ENCODE measurements at regions of chr16 and their contacts with region 1.

Region 1: GRCh38 chr16:79628501-79628975 is 28.0 kb upstream of the MAF start:
- DNase-seq: peak; percentile 91
- H3K4me3 Mint-ChIP-seq: peak overlapping the region; percentile 70
- H3K27ac Mint-ChIP-seq: peak overlapping the region; percentile 88
- H3K4me1 Mint-ChIP-seq: peaks cover 57% of the 10 kb centered on the region
- H3K27me3 Mint-ChIP-seq: peaks cover 15% of the 10 kb centered on the region

Region 2: DNA sequence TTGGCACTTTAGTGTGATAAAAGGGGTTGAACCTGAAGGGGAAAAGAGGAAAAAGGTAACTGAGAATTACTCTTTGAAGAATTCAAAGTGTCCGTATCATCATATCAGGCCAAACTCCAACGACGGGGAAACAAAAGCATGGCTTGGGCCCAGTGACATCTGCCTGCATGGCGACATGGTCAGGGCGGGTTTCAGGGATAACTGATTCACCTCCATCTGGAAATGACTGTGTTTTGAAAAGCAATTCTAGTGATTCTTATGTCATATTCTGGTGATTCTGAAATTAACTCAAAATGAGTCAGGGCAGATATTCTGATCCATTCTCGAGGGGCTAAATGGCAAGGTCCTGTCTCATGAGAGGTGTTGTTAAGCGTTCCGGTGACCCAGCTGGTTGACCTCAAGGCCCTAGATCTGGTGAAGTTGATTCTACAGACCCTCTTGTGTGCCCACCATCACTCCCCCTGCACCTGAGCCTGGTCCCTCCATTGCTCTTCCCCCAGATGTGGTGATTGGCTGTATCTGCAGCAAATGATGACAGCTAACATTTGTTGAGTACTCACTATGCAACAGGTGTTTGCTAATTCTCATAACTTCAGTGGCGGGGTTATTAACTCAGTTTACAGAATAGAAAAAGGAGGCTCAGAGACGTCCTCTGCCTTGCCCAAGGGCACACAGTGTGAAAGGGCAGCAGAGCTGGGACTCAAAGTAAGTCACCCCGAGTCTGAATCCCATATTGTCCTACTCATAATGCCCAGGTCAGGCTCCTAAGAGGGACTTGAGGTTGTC is 279.8 kb before region 1 on chr16:
- intact Hi-C with region 1: no loop called
- DNase-seq: no peak
- H3K4me3 Mint-ChIP-seq: no peak overlapping the region
- H3K27ac Mint-ChIP-seq: no peak overlapping the region
- H3K4me1 Mint-ChIP-seq: no peaks in the 10 kb centered on the region
- H3K27me3 Mint-ChIP-seq: no peaks in the 10 kb centered on the region

Region 3: DNA sequence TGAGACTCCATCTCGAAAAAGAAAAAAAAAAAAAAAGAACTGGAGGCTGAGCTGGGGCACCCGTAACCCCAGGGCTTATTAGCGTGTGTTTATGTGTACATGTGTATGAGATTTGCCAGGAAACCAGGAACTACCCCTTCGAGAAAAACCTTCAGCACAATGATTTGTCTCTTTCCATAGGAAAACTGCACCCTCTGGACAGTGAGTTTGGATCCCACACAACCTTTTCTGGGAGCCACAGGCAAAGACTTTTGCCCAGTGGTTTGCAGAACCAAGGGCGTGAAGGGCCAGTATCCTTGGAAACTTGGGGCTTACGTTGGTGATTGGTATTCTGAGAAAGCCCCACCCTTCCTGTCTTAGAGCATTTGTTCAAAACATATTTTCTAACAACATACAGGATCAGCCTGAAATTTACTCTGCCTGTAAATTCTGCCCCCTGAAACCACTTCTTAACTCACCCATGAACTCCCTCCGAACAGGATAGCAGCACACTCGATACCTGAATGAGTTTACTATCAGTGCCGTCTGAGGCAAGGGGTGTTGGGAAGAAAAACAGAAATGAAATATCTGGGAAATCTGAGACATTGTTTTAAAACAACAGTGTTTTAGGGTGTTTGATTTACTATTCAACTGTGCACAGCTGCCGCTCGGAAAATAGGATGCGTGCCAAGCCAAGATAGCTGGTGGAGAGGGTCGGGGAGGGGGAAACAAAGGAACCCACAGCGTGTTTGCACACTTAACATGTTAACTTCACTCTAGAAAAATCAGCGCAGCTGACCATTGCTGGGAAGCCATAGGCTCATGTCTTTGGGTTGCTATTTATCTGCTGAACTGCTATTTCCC is 12.2 kb after region 1 on chr16:
- intact Hi-C with region 1: loop called (anchors 1 kb)
- DNase-seq: peak; percentile 82
- H3K4me3 Mint-ChIP-seq: peak overlapping the region; percentile 44
- H3K27ac Mint-ChIP-seq: peak overlapping the region; percentile 76
- H3K4me1 Mint-ChIP-seq: peaks cover 39% of the 10 kb centered on the region
- H3K27me3 Mint-ChIP-seq: peaks cover 5% of the 10 kb centered on the region

Region 4: GRCh38 chr16:79651363-79651762 is 22.8 kb after region 1 on chr16:
- intact Hi-C with region 1: no loop called
- DNase-seq: no peak
- H3K4me3 Mint-ChIP-seq: no peak overlapping the region
- H3K27ac Mint-ChIP-seq: no peak overlapping the region
- H3K4me1 Mint-ChIP-seq: peaks cover 4% of the 10 kb centered on the region
- H3K27me3 Mint-ChIP-seq: peaks cover 11% of the 10 kb centered on the region

Region 5: DNA sequence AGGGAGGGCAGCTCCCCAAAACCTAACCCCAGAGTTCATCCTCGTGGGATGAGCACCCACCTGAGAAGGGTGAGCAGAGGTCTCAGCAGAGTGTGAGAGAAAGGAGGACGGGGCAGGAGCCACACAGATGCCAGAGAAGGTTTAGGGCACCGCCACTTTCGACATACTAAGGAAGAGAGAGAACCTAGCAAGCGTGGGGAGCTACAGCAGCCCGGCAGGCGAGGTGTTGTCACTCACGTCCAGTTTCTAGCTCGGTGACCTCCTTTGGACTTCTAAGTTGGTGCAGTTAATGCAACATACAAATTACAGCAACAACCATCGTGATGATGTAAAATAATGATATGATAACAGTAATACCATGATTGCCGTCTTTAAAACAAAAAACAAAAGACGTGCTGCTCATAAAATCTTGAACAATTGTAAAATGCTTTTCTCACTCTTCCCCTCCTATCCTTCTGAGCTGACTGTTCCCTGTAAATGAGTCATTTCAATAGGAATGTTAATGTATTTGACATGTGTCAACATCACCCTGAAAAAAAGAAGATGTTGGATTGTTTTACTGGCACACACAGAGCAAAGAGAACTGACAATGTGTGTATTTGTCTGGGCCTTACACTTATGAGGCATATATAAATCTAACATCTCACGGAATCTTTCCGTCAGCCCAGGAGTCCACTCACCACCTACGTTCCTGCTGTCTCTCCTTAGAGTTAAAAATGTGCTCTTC is 130.2 kb after region 1 on chr16:
- intact Hi-C with region 1: loop called (anchors 1 kb)
- DNase-seq: no peak
- H3K4me3 Mint-ChIP-seq: no peak overlapping the region
- H3K27ac Mint-ChIP-seq: peak overlapping the region; percentile 4
- H3K4me1 Mint-ChIP-seq: peaks cover 26% of the 10 kb centered on the region
- H3K27me3 Mint-ChIP-seq: peaks cover 3% of the 10 kb centered on the region

Region 6: GRCh38 chr16:79845033-79845733 is 216.6 kb after region 1 on chr16:
- intact Hi-C with region 1: loop called (anchors 1 kb)
- DNase-seq: peak; percentile 61
- H3K4me3 Mint-ChIP-seq: peak overlapping the region; percentile 42
- H3K27ac Mint-ChIP-seq: peak overlapping the region; percentile 64
- H3K4me1 Mint-ChIP-seq: peaks cover 37% of the 10 kb centered on the region
- H3K27me3 Mint-ChIP-seq: no peaks in the 10 kb centered on the region

Region 7: GRCh38 chr16:80197741-80198201 is 569.2 kb after region 1 on chr16:
- intact Hi-C with region 1: loop called (anchors 5 kb)
- DNase-seq: no peak
- H3K4me3 Mint-ChIP-seq: no peak overlapping the region
- H3K27ac Mint-ChIP-seq: peak overlapping the region; percentile 70
- H3K4me1 Mint-ChIP-seq: peaks cover 2% of the 10 kb centered on the region
- H3K27me3 Mint-ChIP-seq: no peaks in the 10 kb centered on the region

Measured in activated CD4-positive, alpha-beta T cell treated with anti-CD3 and anti-CD28 coated beads, Interleukin-2, amount 10 ng/mL, durations not matched to agents 24 days and 14 days (primary cell).